Heart right ventricle (tissue), 16 donors: ENCODE measurements at regions of chr13 and their contacts with region 1.

Region 1: DNA sequence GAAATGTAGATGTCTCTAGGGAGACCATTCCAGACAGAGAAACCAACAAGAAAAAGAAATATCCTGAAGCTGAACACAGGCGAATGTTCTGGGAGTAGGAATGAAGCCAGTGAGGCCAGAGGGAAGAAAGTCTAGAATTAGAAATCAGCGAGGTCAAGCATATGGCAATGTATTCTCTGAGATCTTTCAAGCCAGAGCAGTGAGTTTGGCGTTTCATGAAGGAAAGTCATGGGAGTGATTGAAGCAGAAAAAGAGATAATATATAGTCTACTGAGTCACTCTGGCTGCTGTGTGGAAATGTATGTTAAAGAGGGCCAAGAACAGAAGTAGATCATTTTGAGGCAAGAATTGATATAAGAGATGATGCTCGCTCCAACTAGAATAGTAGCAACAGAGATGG is 576.0 kb downstream of the PCDH17 start:
- DNase-seq: no peak
- ATAC-seq: no peak
- H3K4me3 ChIP-seq: no peak overlapping the region
- H3K27ac ChIP-seq: no peak overlapping the region
- H3K4me1 ChIP-seq: no peaks in the 10 kb centered on the region
- H3K27me3 ChIP-seq: no peaks in the 10 kb centered on the region
- CTCF ChIP-seq: no peak

Region 2: DNA sequence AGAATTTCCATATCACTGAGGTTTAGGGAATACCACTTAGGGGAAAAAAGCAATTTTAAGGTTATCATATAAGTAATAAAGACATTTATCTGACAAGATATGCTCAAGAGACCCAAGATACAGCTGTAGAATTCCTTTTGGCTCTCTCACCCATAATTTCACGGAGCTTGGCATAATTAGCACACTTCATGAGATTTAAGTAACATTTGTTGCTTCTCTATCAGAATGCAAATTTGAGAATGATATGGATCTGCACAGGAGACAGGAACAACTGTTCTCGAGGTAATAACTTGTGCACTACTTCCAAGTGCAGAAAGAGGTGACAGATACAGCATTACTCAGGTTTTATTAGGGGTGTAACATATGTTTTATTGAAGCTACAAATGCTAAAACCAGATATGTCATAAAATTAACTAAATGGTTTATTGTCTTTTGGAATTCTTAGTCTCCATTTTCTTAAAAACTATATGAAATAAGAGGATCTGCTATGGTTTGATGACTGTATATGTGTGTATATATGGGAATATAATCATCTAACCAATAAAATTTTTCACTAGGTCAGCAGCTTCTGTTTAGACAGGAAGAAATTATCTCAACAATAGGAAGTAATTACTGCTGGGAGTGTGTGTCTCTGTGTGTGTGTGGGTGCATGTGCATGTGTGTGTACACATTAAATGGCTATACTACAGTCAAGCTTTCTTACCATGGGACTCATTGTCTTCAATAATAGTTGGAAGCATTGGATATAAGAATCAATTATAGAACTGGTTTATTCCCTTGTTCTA is 174.6 kb before region 1 on chr13:
- intact Hi-C with region 1: loop called in 1 of 10 experiments (anchors 5 kb)
- DNase-seq: no peak
- ATAC-seq: no peak
- H3K4me3 ChIP-seq: no peak overlapping the region
- H3K27ac ChIP-seq: no peak overlapping the region
- H3K4me1 ChIP-seq: no peaks in the 10 kb centered on the region
- H3K27me3 ChIP-seq: no peaks in the 10 kb centered on the region
- CTCF ChIP-seq: no peak

Region 3: GRCh38 chr13:58165617-58166016 is 41.9 kb before region 1 on chr13:
- intact Hi-C with region 1: no loop called
- DNase-seq: no peak
- ATAC-seq: no peak
- H3K4me3 ChIP-seq: no peak overlapping the region
- H3K27ac ChIP-seq: no peak overlapping the region
- H3K4me1 ChIP-seq: no peaks in the 10 kb centered on the region
- H3K27me3 ChIP-seq: no peaks in the 10 kb centered on the region
- CTCF ChIP-seq: no peak

Region 4: GRCh38 chr13:58247080-58247479 is 39.6 kb after region 1 on chr13:
- intact Hi-C with region 1: no loop called
- DNase-seq: no peak
- ATAC-seq: peak in 6 of 8 donors; percentile 16 to 82 (median 72)
- H3K4me3 ChIP-seq: no peak overlapping the region
- H3K27ac ChIP-seq: peak overlapping the region in 3 of 10 donors; percentile 20 to 39 (median 21)
- H3K4me1 ChIP-seq: peaks cover 0 to 4% (median 0%) of the 10 kb centered on the region in 9 donors
- H3K27me3 ChIP-seq: no peaks in the 10 kb centered on the region
- CTCF ChIP-seq: no peak

Region 5: DNA sequence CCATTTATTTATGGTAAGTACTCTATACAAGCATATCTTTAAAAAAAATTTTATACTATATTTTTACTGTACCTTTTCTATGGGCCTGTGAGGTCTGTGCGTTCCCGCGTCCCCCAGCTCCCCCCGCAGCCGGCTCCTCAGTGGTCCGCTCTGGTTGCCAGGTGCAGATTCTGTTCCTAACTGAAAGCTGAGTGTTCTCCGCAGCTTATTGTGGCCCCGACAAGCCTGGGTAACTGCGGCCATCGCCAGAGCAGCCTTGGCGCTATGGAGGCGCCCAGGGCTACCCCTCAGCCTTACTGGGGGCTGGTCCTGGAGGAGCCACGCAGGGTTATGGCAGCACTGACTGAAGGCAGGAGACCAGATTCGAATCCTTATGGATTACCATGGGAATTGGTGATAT is 320.9 kb after region 1 on chr13:
- intact Hi-C with region 1: no loop called
- DNase-seq: no peak
- ATAC-seq: no peak
- H3K4me3 ChIP-seq: no peak overlapping the region
- H3K27ac ChIP-seq: no peak overlapping the region
- H3K4me1 ChIP-seq: no peaks in the 10 kb centered on the region
- H3K27me3 ChIP-seq: no peaks in the 10 kb centered on the region
- CTCF ChIP-seq: no peak